Endothelial cell of umbilical vein (primary cell): ENCODE measurements at regions of chr9 and their contacts with region 1.

Region 1: GRCh38 chr9:3976865-3977613 is 322.8 kb downstream of the GLIS3 start:
- DNase-seq: no peak
- H3K4me3 ChIP-seq: no peak overlapping the region
- H3K27ac ChIP-seq: no peak overlapping the region
- H3K4me1 ChIP-seq: no peaks in the 10 kb centered on the region
- H3K27me3 ChIP-seq: peaks cover 0 to 2% of the 10 kb centered on the region in 2 experiments
- CTCF ChIP-seq: no peak
- POLR2A ChIP-seq: no peak

Region 2: GRCh38 chr9:4228606-4229005 is 251.6 kb after region 1 on chr9:
- CTCF ChIA-PET with region 1: no interaction called
- POLR2A ChIA-PET with region 1: no interaction called
- dilution Hi-C with region 1: no loop called
- intact Hi-C with region 1: no loop called
- DNase-seq: peak; percentile 25
- H3K4me3 ChIP-seq: no peak overlapping the region
- H3K27ac ChIP-seq: no peak overlapping the region
- H3K4me1 ChIP-seq: no peaks in the 10 kb centered on the region
- H3K27me3 ChIP-seq: peaks cover 0 to 2% of the 10 kb centered on the region in 2 experiments
- CTCF ChIP-seq: peak; percentile 11 to 42
- POLR2A ChIP-seq: no peak

Region 3: GRCh38 chr9:4243877-4244820 is 267.1 kb after region 1 on chr9:
- CTCF ChIA-PET with region 1: no interaction called
- POLR2A ChIA-PET with region 1: no interaction called
- dilution Hi-C with region 1: no loop called
- intact Hi-C with region 1: no loop called
- DNase-seq: no peak
- H3K4me3 ChIP-seq: no peak overlapping the region
- H3K27ac ChIP-seq: no peak overlapping the region
- H3K4me1 ChIP-seq: no peaks in the 10 kb centered on the region
- H3K27me3 ChIP-seq: no peaks in the 10 kb centered on the region
- CTCF ChIP-seq: no peak
- POLR2A ChIP-seq: no peak

Region 4: DNA sequence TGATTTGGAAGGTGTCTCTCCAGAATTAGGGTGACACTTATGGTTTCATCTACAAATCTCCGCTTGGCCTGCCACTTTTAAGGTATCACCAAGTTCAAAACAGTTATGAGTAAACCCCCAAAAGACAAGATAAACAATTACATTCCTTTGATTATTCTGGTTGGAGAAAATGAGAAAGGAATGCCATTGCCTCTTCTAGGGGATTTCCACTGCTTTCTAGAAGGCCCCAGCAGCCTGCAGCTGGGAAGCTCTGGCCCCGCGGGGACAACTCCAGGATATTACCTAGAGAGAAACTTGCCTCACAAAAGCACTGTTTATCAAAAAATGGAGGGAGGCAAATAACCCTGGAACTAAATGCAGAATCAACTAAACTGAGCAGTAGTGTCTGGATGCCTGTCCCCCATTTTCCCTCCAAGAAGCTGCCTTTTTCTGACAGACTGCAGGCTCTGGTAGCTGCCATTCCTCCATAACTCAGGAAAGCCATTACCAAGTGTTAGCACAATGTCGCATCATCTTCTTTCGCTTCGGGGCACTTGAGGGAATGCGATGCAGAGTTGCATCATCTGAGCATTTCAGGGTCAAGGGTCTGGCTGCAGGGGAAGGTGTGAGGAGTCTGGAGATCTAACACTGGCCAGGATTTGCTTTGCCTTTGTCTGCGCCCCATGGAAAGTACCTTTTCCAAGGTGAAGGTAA is 613.5 kb after region 1 on chr9:
- CTCF ChIA-PET with region 1: no interaction called
- POLR2A ChIA-PET with region 1: interaction called, 11 read pairs
- dilution Hi-C with region 1: no loop called
- intact Hi-C with region 1: no loop called
- DNase-seq: no peak
- H3K4me3 ChIP-seq: no peak overlapping the region
- H3K27ac ChIP-seq: no peak overlapping the region
- H3K4me1 ChIP-seq: peaks cover 2% of the 10 kb centered on the region
- H3K27me3 ChIP-seq: no peaks in the 10 kb centered on the region
- CTCF ChIP-seq: no peak
- POLR2A ChIP-seq: no peak